Heart right ventricle (tissue), 16 donors: ENCODE measurements at regions of chr17 and their contacts with region 1.

Region 1: DNA sequence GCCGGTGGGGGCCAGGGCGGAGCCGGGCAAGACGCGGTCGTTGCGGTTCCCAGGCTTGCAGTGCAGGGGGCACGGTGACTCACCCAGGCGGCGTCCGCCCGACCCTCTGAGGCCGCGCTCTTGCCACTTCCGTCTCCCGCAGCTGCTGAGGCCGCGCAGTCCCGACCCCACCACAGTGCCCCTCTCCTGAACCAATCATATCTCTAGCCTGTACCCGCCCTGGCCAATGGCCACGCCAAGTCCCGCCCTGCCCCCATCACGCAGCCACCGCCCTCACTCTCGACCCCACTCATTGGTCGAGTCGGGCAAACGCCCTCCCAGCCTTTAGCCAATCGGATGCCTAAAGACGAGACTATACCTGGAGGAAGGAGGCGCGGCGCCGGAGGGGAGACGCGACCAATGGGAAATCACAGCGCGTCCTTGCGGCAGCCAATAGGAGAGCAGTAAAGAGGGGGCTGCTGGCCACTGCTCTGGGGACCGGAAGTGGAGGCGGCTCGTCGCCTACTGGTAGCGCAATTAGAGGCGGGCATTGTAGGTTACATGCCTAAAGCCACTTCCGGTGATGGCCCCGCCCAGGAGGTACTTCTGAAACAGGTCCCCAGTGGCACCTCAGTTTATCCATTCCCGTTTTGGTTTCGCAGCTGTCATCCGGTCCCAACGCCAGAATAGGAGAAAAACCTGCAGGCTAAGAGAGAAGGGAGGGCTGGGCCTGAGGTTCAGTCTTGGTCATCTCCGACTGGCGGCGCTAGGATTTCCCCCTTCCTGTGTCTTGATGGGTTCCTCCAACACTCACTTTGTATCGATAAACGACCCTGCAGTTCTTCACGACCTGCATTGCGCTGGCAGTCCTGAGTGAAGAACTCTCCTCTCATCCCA is 3.5 kb upstream of the MTMR4 start:
- DNase-seq: peak; percentile 99 to 100
- ATAC-seq: peak; percentile 88 to 94 (median 92)
- H3K4me3 ChIP-seq: peak overlapping the region; percentile 52 to 96 (median 70)
- H3K27ac ChIP-seq: peak overlapping the region; percentile 92 to 98 (median 94)
- H3K4me1 ChIP-seq: peaks cover 25 to 63% (median 60%) of the 10 kb centered on the region in 9 donors
- H3K27me3 ChIP-seq: no peaks in the 10 kb centered on the region
- CTCF ChIP-seq: peak in 1 of 9 donors; percentile 24

Region 2: GRCh38 chr17:58577642-58578091 is 59.7 kb after region 1 on chr17:
- intact Hi-C with region 1: loop called in 3 of 10 experiments (anchors 5 to 10 kb)
- DNase-seq: peak; percentile 23 to 43
- ATAC-seq: peak in 3 of 8 donors; percentile 26 to 53 (median 31)
- H3K4me3 ChIP-seq: no peak overlapping the region
- H3K27ac ChIP-seq: no peak overlapping the region
- H3K4me1 ChIP-seq: peaks cover 0 to 13% (median 0%) of the 10 kb centered on the region in 9 donors
- H3K27me3 ChIP-seq: no peaks in the 10 kb centered on the region
- CTCF ChIP-seq: peak; percentile 21 to 71 (median 64)

Region 3: GRCh38 chr17:58631523-58632323 is 113.8 kb after region 1 on chr17:
- intact Hi-C with region 1: loop called in 7 of 10 experiments (anchors 1 to 10 kb)
- DNase-seq: peak; percentile 92 to 96
- ATAC-seq: peak; percentile 96 to 98 (median 97)
- H3K4me3 ChIP-seq: peak overlapping the region in 9 of 10 donors; percentile 32 to 50 (median 42)
- H3K27ac ChIP-seq: peak overlapping the region; percentile 9 to 89 (median 86)
- H3K4me1 ChIP-seq: peaks cover 0 to 19% (median 9%) of the 10 kb centered on the region in 9 donors
- H3K27me3 ChIP-seq: no peaks in the 10 kb centered on the region
- CTCF ChIP-seq: peak in 5 of 9 donors; percentile 24 to 52 (median 45)

Region 4: DNA sequence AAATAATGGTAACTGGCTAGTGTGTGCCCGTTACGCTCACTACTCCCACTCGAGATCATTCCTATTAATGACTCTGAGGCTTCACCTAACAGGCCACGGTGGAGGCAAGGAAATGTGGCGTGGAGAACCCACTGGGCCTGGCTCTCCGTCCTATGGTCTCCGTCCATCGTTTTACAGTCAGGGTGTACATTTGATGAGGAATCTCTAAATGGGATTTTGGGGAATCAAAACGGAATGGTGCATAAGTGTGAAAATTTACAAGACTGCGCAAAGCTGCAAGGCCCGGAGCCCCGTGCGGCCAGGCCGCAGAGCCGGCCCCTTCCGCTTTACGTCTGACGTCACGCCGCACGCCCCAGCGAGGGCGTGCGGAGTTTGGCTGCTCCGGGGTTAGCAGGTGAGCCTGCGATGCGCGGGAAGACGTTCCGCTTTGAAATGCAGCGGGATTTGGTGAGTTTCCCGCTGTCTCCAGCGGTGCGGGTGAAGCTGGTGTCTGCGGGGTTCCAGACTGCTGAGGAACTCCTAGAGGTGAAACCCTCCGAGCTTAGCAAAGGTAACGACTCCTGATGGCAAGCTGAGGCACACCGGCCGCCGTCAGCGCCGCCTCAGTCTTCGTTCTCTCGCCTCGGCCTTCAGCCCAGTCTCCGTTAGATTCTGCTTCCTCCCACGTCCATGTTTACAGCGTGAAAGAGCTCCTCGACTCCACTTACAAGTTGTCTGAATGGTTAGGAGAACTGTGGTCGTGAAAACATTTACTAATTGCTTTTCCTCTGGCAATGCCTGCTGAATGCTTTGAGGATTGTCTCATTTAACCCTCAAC is 174.5 kb after region 1 on chr17 and contains the start of gene RAD51C:
- intact Hi-C with region 1: loop called in 8 of 10 experiments (anchors 1 to 10 kb)
- DNase-seq: peak; percentile 84 to 87
- ATAC-seq: peak; percentile 99 to 100 (median 99)
- H3K4me3 ChIP-seq: peak within 1 kb of the TSS; percentile 21 to 87 (median 72)
- H3K27ac ChIP-seq: peak within 1 kb of the TSS in 9 of 10 donors; percentile 67 to 90 (median 82)
- H3K4me1 ChIP-seq: peaks cover 0 to 25% (median 16%) of the 10 kb centered on the region in 9 donors
- H3K27me3 ChIP-seq: no peaks in the 10 kb centered on the region
- CTCF ChIP-seq: peak in 1 of 9 donors; percentile 19
- total RNA-seq, gene RAD51C: 33.2 to 40.7 (median 37.6) TPM

Region 5: GRCh38 chr17:59004338-59005111 is 486.6 kb after region 1 on chr17:
- intact Hi-C with region 1: loop called (anchors 2 to 10 kb)
- DNase-seq: peak in 1 of 2 donors; percentile 58
- ATAC-seq: peak in 6 of 8 donors; percentile 66 to 81 (median 74)
- H3K4me3 ChIP-seq: no peak overlapping the region
- H3K27ac ChIP-seq: peak overlapping the region in 1 of 10 donors; percentile 3
- H3K4me1 ChIP-seq: peaks cover 0 to 29% (median 6%) of the 10 kb centered on the region in 9 donors
- H3K27me3 ChIP-seq: no peaks in the 10 kb centered on the region
- CTCF ChIP-seq: peak; percentile 79 to 98 (median 96)

Region 6: GRCh38 chr17:59155439-59156182 is 637.6 kb after region 1 on chr17 and contains the start of gene PRR11:
- intact Hi-C with region 1: loop called in 1 of 10 experiments (anchors 1 kb)
- DNase-seq: peak; percentile 85 to 95
- ATAC-seq: peak; percentile 92 to 98 (median 95)
- H3K4me3 ChIP-seq: peak within 1 kb of the TSS; percentile 44 to 93 (median 80)
- H3K27ac ChIP-seq: peak within 1 kb of the TSS; percentile 46 to 92 (median 88)
- H3K4me1 ChIP-seq: peaks cover 0 to 56% (median 28%) of the 10 kb centered on the region in 9 donors
- H3K27me3 ChIP-seq: no peaks in the 10 kb centered on the region
- CTCF ChIP-seq: no peak
- total RNA-seq, gene PRR11: 0.61 to 6.9 (median 1.4) TPM